CD4-positive, alpha-beta memory T cell (primary cell): ENCODE measurements at regions of chrX and their contacts with region 1.

Region 1: GRCh38 chrX:11787564-11787963 is 29.5 kb downstream of the MSL3 start:
- DNase-seq: peak; percentile 54 to 62 (median 57)
- H3K4me3 ChIP-seq: no peak overlapping the region
- H3K4me3 Mint-ChIP-seq: peak overlapping the region; percentile 55 to 79 (median 71)
- H3K27ac ChIP-seq: no peak overlapping the region
- H3K27ac Mint-ChIP-seq: peak overlapping the region in 3 of 7 donors; percentile 19 to 46 (median 22)
- H3K4me1 ChIP-seq: peaks cover 12% of the 10 kb centered on the region
- H3K4me1 Mint-ChIP-seq: peaks cover 5 to 28% (median 9%) of the 10 kb centered on the region in 4 donors
- H3K27me3 ChIP-seq: no peaks in the 10 kb centered on the region
- H3K27me3 Mint-ChIP-seq: no peaks in the 10 kb centered on the region

Region 2: GRCh38 chrX:11908371-11908770 is 120.8 kb after region 1 on chrX:
- CTCF ChIA-PET with region 1: interaction called, 6 read pairs
- POLR2A ChIA-PET with region 1: no interaction called
- intact Hi-C with region 1: loop called (anchors 1 kb)
- DNase-seq: peak in 4 of 5 donors; percentile 6 to 17 (median 10)
- H3K4me3 ChIP-seq: no peak overlapping the region
- H3K4me3 Mint-ChIP-seq: no peak overlapping the region
- H3K27ac ChIP-seq: no peak overlapping the region
- H3K27ac Mint-ChIP-seq: no peak overlapping the region
- H3K4me1 ChIP-seq: no peaks in the 10 kb centered on the region
- H3K4me1 Mint-ChIP-seq: no peaks in the 10 kb centered on the region
- H3K27me3 ChIP-seq: no peaks in the 10 kb centered on the region
- H3K27me3 Mint-ChIP-seq: peaks cover 0 to 2% of the 10 kb centered on the region in 2 donors

Region 3: GRCh38 chrX:12791257-12792228 is 1004.0 kb after region 1 on chrX and contains the start of gene PRPS2:
- CTCF ChIA-PET with region 1: no interaction called
- POLR2A ChIA-PET with region 1: no interaction called
- intact Hi-C with region 1: loop called (anchors 10 kb)
- DNase-seq: peak; percentile 61 to 74 (median 65)
- H3K4me3 ChIP-seq: peak within 1 kb of the TSS in 1 of 2 donors; percentile 62
- H3K4me3 Mint-ChIP-seq: peak within 1 kb of the TSS; percentile 87 to 91 (median 88)
- H3K27ac ChIP-seq: peak within 1 kb of the TSS; percentile 41
- H3K27ac Mint-ChIP-seq: peak within 1 kb of the TSS; percentile 67 to 90 (median 72)
- H3K4me1 ChIP-seq: peaks cover 22% of the 10 kb centered on the region
- H3K4me1 Mint-ChIP-seq: peaks cover 11 to 34% (median 20%) of the 10 kb centered on the region in 4 donors
- H3K27me3 ChIP-seq: no peaks in the 10 kb centered on the region
- H3K27me3 Mint-ChIP-seq: no peaks in the 10 kb centered on the region
- total RNA-seq, gene PRPS2: 26.5 to 31.5 TPM